Activated CD4-positive, alpha-beta memory T cell treated with anti-CD3 and anti-CD28 coated beads, Interleukin-2, amount 10 ng/mL, durations not matched to agents 7 days and 5 days (primary cell): ENCODE measurements at regions of chr6 and their contacts with region 1.

Region 1: DNA sequence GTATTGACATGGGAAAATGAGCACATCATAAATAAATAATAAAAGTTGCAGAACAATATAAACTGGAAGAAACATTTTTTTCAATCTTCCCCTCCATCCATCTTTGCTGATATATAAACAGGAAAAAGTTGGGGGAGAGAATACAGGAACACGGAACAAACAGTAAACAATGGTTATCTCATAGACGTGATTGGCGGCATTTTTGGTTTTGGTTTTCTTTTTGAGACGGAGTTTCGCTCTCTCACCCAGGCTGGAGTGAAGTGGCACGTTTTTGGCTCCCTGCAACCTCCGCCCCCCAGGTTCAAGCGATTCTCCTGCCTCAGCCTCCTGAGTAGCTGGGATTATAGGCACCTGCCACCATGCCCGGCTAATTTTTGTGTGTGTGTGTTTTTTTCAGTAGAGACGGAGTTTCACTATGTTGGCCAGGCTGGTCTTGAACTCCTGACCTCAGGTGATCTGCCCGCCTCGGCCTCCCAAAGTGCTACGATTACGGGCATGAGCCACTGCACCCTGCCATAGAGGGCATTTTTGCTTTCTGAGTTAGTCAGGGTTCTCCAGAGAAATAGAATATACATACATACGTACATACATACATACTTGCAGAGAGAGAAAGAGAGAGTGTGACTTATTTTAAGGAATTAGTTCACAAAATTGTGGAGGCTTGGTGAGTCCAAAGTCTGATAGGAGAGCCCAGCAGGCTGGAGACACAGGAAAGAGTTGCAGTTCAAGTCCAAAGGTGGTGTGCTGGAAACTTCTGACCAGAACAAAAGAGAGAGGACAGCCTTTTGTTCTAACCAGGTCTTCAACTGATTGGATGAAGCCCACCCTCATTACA is 22.6 kb downstream of the GNL1 start:
- DNase-seq: peak; percentile 42
- H3K4me3 Mint-ChIP-seq: peak overlapping the region; percentile 80
- H3K27ac Mint-ChIP-seq: peak overlapping the region; percentile 85
- H3K4me1 Mint-ChIP-seq: peaks cover 41% of the 10 kb centered on the region
- H3K27me3 Mint-ChIP-seq: no peaks in the 10 kb centered on the region

Region 2: GRCh38 chr6:30447237-30447636 is 86.4 kb before region 1 on chr6:
- CTCF ChIA-PET with region 1: no interaction called
- POLR2A ChIA-PET with region 1: no interaction called
- DNase-seq: no peak
- H3K4me3 Mint-ChIP-seq: no peak overlapping the region
- H3K27ac Mint-ChIP-seq: no peak overlapping the region
- H3K4me1 Mint-ChIP-seq: peaks cover 25% of the 10 kb centered on the region
- H3K27me3 Mint-ChIP-seq: peaks cover 91% of the 10 kb centered on the region

Region 3: GRCh38 chr6:30500421-30501355 is 33.0 kb before region 1 on chr6:
- CTCF ChIA-PET with region 1: interaction called, 86 read pairs
- POLR2A ChIA-PET with region 1: interaction called, 154 read pairs
- DNase-seq: no peak
- H3K4me3 Mint-ChIP-seq: peak overlapping the region; percentile 37
- H3K27ac Mint-ChIP-seq: peak overlapping the region; percentile 40
- H3K4me1 Mint-ChIP-seq: peaks cover 30% of the 10 kb centered on the region
- H3K27me3 Mint-ChIP-seq: no peaks in the 10 kb centered on the region

Region 4: DNA sequence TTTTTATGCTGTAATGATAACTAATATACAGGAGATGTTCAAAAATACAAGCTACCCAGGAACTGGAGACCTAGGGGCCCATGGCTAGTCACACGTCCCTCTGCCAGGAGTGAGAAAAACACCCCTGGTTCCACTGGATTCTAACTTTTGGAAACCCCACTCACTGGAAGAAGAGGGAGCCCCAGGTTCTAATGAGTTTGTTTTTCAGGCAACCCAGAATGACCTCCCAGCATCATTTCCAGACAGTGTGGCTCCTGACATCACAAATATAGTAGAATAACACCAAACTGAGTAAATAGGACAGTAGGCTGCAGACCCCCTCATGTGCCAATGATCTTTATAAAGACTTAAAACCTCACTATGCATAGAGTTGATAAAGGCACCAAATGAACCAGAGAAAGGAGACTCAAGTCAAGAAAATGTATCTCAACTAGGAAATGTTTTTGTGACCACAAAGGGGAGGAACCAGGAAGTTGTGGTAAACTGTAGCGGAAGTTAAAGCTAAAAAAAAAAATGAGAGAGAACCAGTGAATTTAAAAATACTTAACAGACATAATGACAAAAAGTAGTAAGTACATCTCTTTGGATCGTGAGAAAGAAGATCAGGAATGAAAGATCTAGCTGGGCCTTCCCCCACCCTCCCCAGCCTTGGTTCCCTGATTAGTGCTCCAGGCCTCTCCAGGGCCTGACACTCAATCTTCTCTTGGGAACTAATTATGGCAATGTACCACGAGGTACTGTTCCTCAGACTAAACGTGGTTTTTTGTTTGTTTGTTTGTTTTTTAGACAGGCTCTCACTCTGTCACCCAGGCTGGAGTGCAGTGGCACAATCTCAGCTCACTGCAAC is 24.6 kb before region 1 on chr6:
- CTCF ChIA-PET with region 1: interaction called, 25 read pairs
- POLR2A ChIA-PET with region 1: interaction called, 23 read pairs
- DNase-seq: no peak
- H3K4me3 Mint-ChIP-seq: peak overlapping the region; percentile 50
- H3K27ac Mint-ChIP-seq: peak overlapping the region; percentile 89
- H3K4me1 Mint-ChIP-seq: peaks cover 46% of the 10 kb centered on the region
- H3K27me3 Mint-ChIP-seq: no peaks in the 10 kb centered on the region

Region 5: DNA sequence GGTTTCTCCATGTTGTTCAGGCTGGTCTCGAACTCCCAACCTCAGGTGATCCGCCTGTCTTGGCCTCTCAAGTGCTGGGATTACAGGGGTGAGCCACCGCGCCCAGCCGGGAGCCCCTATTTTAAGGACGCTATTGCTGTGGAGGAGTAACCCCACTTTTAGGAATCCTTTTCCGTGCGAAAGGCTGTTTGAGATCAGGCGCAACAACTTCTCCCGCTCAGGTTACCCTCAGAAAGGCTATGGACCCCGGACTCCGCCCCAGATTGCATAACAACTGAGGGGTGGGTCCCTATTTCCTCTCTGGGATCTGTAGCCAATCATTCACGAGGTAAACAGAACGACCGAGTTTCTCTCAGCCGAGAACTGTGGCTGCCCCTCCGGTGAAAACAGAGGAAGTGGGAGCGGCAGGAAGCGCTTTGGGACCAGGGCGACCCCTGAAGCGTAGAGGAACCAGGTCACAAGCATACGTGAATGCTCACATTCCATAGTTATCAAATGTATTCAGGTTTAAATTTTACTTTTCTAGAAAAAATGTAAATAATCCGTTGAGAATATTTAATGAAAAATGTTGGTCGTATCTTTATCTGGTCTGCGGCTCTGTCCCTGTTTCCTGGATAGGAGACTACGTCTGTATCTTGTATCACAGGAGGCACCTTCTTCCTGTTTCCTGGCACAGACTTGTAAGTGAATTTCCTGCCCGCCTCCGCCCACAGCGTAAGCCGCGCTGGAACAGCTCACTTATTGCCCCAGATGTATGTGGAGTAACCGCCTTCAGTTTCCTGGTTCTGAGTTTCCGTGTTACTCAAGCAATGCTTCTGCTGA is 17.5 kb before region 1 on chr6:
- CTCF ChIA-PET with region 1: interaction called, 20 read pairs
- POLR2A ChIA-PET with region 1: interaction called, 8 read pairs
- DNase-seq: peak; percentile 94
- H3K4me3 Mint-ChIP-seq: peak overlapping the region; percentile 66
- H3K27ac Mint-ChIP-seq: peak overlapping the region; percentile 96
- H3K4me1 Mint-ChIP-seq: peaks cover 43% of the 10 kb centered on the region
- H3K27me3 Mint-ChIP-seq: no peaks in the 10 kb centered on the region